ENCODE measurements at regions of chr6 and their contacts with region 1.

Region 1: DNA sequence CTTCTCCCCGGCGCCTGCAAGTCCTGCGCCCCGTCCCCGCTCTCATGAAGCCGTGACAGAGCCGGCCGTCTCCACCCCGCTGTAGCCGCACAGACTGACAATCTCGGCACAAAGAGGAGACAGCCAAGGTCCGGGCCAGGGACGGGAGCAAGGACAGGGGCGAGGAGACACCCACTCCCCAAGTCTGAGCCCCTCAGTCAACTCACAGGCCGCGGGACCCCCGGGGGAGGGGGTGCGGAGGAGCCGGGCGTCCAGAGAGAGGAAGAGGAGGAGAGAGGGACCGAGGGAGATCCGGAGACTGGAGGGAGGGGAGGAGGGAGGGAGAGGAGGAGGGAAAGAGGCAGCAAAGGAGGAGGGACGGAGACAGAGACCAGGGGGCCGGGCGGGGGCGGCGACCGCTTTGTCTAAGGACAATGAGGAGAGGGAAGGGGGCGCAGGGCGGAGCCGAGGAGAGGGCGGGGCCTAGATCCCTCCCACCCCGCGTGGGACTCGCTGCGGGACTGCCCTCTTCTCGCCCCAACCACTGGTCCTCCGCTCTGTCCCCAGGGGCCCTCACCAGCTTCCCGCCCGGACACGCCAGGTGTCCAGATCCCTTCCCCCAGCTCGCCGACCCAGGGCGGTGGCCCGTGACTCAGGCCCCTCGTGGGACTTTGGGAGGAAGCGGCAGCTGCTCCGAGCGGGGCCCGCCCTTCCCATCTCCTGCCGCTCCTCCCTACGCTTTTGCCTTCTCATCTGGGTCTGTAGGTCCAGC is 638 bp upstream of the PPP1R18 start:
- DNase-seq: peak; percentile 96
- H3K4me3 Mint-ChIP-seq: peak overlapping the region; percentile 94
- H3K27ac Mint-ChIP-seq: peak overlapping the region; percentile 80
- H3K4me1 Mint-ChIP-seq: peaks cover 66% of the 10 kb centered on the region
- H3K27me3 Mint-ChIP-seq: no peaks in the 10 kb centered on the region
- CTCF ChIP-seq: no peak

Region 2: GRCh38 chr6:30386166-30386565 is 300.9 kb before region 1 on chr6:
- CTCF ChIA-PET with region 1: no interaction called
- POLR2A ChIA-PET with region 1: no interaction called
- intact Hi-C with region 1: no loop called
- DNase-seq: no peak
- H3K4me3 Mint-ChIP-seq: no peak overlapping the region
- H3K27ac Mint-ChIP-seq: no peak overlapping the region
- H3K4me1 Mint-ChIP-seq: no peaks in the 10 kb centered on the region
- H3K27me3 Mint-ChIP-seq: peaks cover 100% of the 10 kb centered on the region
- CTCF ChIP-seq: no peak

Region 3: DNA sequence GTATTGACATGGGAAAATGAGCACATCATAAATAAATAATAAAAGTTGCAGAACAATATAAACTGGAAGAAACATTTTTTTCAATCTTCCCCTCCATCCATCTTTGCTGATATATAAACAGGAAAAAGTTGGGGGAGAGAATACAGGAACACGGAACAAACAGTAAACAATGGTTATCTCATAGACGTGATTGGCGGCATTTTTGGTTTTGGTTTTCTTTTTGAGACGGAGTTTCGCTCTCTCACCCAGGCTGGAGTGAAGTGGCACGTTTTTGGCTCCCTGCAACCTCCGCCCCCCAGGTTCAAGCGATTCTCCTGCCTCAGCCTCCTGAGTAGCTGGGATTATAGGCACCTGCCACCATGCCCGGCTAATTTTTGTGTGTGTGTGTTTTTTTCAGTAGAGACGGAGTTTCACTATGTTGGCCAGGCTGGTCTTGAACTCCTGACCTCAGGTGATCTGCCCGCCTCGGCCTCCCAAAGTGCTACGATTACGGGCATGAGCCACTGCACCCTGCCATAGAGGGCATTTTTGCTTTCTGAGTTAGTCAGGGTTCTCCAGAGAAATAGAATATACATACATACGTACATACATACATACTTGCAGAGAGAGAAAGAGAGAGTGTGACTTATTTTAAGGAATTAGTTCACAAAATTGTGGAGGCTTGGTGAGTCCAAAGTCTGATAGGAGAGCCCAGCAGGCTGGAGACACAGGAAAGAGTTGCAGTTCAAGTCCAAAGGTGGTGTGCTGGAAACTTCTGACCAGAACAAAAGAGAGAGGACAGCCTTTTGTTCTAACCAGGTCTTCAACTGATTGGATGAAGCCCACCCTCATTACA is 153.4 kb before region 1 on chr6:
- CTCF ChIA-PET with region 1: no interaction called
- POLR2A ChIA-PET with region 1: no interaction called
- intact Hi-C with region 1: no loop called
- DNase-seq: no peak
- H3K4me3 Mint-ChIP-seq: no peak overlapping the region
- H3K27ac Mint-ChIP-seq: no peak overlapping the region
- H3K4me1 Mint-ChIP-seq: no peaks in the 10 kb centered on the region
- H3K27me3 Mint-ChIP-seq: no peaks in the 10 kb centered on the region
- CTCF ChIP-seq: no peak

Region 4: DNA sequence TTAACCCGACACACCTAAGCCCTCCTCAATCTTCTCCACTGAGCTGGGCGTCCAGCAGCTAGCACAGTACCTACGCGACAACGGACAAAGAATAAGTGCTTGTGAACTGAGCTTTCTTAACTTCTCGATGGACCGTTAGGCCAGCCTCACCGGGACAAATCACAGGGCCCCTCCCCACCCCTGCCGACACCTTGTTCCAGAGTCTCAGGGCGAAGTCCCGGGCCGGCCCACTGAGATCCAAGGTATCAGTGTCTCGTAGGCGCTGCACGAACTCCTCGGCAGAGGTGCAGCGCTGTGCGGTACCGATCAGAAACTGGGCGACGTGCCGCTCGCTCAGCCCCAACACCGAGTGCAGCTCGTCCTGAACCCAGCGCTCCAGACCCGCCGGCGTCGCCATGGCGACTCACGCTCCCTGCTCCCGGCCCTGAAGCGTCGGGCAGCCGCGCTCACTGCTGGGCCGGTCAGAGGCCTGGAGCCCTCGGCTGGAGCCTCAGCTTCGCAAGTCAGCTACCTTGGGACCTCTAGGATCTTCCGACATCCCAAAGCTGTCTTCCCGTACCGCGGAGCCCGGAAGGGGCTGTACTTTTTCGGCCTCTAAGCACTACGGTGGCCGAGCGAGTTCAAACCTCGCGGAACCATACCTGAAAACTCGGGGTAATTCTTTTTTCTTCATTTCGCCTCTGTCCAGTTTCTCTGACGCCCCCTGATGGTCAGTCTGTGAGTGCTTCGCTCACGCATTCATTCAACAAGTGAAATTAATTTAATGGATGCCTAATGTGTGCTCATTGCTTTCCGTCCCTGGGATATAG is 14.4 kb before region 1 on chr6 and contains the start of gene DHX16:
- CTCF ChIA-PET with region 1: interaction called, 26 read pairs
- POLR2A ChIA-PET with region 1: interaction called, 19 read pairs
- intact Hi-C with region 1: no loop called
- DNase-seq: peak; percentile 99
- H3K4me3 Mint-ChIP-seq: peak within 1 kb of the TSS; percentile 83
- H3K27ac Mint-ChIP-seq: peak within 1 kb of the TSS; percentile 52
- H3K4me1 Mint-ChIP-seq: peaks cover 12% of the 10 kb centered on the region
- H3K27me3 Mint-ChIP-seq: no peaks in the 10 kb centered on the region
- CTCF ChIP-seq: peak; percentile 71
- total RNA-seq, gene DHX16: 41.3 and 49.8 TPM in 2 replicates

Region 5: DNA sequence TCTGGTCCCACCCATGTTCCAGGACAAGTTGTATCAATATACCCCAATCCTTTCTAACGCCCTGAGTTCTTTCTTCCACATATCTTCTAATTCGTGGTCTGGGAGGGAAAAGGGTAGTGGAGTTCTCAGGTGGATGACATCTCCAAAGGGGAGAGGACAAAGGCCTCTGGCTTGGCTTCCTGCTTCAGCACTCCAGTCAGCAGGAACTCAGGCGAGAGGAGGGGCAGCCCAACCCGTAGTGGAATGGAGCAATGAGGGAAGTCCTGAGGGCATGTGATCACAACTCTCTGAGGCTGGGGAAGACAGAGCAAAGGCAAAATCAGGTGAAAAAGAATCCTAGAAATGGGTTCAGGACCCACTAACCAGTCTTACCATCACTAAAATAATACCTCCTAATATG is 13.3 kb after region 1 on chr6:
- CTCF ChIA-PET with region 1: interaction called, 7 read pairs
- POLR2A ChIA-PET with region 1: interaction called, 20 read pairs
- intact Hi-C with region 1: no loop called
- DNase-seq: no peak
- H3K4me3 Mint-ChIP-seq: no peak overlapping the region
- H3K27ac Mint-ChIP-seq: no peak overlapping the region
- H3K4me1 Mint-ChIP-seq: peaks cover 6% of the 10 kb centered on the region
- H3K27me3 Mint-ChIP-seq: no peaks in the 10 kb centered on the region
- CTCF ChIP-seq: no peak

Region 6: DNA sequence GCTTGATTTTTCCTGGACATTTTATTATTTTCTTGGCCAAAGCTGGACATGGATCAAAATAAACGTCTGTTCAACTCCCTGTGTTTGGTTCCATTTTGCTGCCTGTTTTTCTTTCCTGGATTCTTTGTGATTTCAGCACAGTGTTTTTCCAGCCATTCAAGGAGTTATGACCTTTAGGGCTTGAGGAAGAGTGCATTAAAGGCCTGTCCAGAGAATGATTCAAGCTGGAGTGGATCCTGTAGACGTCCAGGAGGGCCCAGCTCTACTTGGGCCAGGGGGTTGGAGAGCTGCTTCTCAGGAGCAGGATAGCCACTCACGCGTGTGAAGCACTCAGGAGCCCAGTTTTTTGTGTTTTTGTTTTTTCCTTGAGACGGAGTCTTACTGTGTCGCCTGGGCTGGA is 113.8 kb after region 1 on chr6:
- CTCF ChIA-PET with region 1: no interaction called
- POLR2A ChIA-PET with region 1: no interaction called
- intact Hi-C with region 1: no loop called
- DNase-seq: no peak
- H3K4me3 Mint-ChIP-seq: no peak overlapping the region
- H3K27ac Mint-ChIP-seq: no peak overlapping the region
- H3K4me1 Mint-ChIP-seq: no peaks in the 10 kb centered on the region
- H3K27me3 Mint-ChIP-seq: no peaks in the 10 kb centered on the region
- CTCF ChIP-seq: no peak

Measured in MCF 10A (cell line).